Tibial artery (tissue), 4 donors: ENCODE measurements at regions of chr2 and their contacts with region 1.

Region 1: GRCh38 chr2:27703638-27704341 is 40.1 kb downstream of the SLC4A1AP start:
- DNase-seq: peak; percentile 92 to 93
- H3K4me3 ChIP-seq: no peak overlapping the region
- H3K27ac ChIP-seq: peak overlapping the region; percentile 94 to 97
- H3K4me1 ChIP-seq: peaks cover 4 to 53% (median 41%) of the 10 kb centered on the region in 4 donors
- H3K27me3 ChIP-seq: no peaks in the 10 kb centered on the region
- CTCF ChIP-seq: peak; percentile 88 to 95

Region 2: DNA sequence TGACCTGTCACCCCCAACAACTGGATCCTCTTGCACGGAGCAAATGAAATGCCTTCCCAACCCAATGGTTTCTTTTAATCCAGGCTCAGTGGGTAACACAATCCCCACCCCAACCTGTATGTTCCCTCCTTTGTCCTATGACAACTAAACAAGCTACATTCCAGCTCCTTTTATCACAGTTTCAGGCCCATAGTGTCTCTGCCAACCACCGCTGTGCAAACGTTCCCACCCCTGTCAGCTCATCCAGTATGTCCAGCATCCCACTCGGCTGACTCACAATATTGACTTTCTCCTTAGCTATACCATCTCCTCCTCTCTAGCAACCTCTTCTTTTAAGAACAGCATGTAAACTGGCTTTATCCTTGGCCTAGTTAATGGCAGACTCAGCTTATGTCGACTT is 930.0 kb after region 1 on chr2:
- intact Hi-C with region 1: loop called (anchors 5 kb)
- DNase-seq: peak in 1 of 2 donors; percentile 65
- H3K4me3 ChIP-seq: no peak overlapping the region
- H3K27ac ChIP-seq: peak overlapping the region; percentile 98
- H3K4me1 ChIP-seq: peaks cover 0 to 96% (median 70%) of the 10 kb centered on the region in 4 donors
- H3K27me3 ChIP-seq: no peaks in the 10 kb centered on the region
- CTCF ChIP-seq: no peak